Activated naive CD4-positive, alpha-beta T cell treated with anti-CD3 and anti-CD28 coated beads for 36 hours (primary cell): ENCODE measurements at regions of chr1 and their contacts with region 1.

Region 1: GRCh38 chr1:158124999-158125398 is 55.7 kb upstream of the CD1D start:
- DNase-seq: peak; percentile 86
- H3K4me3 Mint-ChIP-seq: no peak overlapping the region
- H3K27ac Mint-ChIP-seq: no peak overlapping the region
- H3K4me1 Mint-ChIP-seq: no peaks in the 10 kb centered on the region
- H3K27me3 Mint-ChIP-seq: peaks cover 23% of the 10 kb centered on the region

Region 2: GRCh38 chr1:157369808-157370521 is 755.0 kb before region 1 on chr1:
- CTCF ChIA-PET with region 1: no interaction called
- intact Hi-C with region 1: loop called (anchors 10 kb)
- DNase-seq: peak; percentile 58
- H3K4me3 Mint-ChIP-seq: no peak overlapping the region
- H3K27ac Mint-ChIP-seq: no peak overlapping the region
- H3K4me1 Mint-ChIP-seq: no peaks in the 10 kb centered on the region
- H3K27me3 Mint-ChIP-seq: peaks cover 8% of the 10 kb centered on the region

Region 3: DNA sequence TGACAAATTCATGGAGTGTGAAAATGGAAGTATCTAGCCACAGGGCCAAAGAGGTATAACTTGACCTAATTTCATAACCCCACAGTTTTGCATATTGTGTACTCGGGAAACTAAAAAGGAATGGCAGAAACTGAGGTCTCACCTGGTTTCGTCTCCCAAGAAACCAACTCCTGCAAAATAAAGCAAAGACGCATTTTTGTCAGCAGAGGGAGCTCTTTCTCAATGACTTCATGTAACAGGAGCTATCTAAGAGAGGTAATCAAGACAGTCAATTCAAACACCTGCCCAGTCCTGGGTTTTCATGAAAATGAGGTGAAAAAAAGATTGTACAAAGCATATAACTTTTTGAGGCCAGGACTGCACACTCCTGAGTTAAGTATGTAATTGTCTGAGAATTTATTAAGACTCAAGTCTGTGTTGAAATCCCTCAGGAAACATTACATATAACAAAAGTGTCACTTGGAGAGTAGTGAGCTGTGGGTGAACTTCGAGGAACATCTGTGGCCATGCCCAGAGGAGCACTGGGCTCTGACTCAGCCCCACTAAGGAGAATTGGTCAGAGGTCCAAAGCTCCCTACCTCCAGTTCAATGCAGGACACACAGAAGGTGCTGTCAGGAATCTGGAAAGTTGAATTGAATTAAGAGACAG is 544.7 kb before region 1 on chr1:
- CTCF ChIA-PET with region 1: interaction called, 13 read pairs
- intact Hi-C with region 1: loop called (anchors 5 kb)
- DNase-seq: peak; percentile 33
- H3K4me3 Mint-ChIP-seq: no peak overlapping the region
- H3K27ac Mint-ChIP-seq: no peak overlapping the region
- H3K4me1 Mint-ChIP-seq: no peaks in the 10 kb centered on the region
- H3K27me3 Mint-ChIP-seq: peaks cover 2% of the 10 kb centered on the region

Region 4: GRCh38 chr1:157652859-157653493 is 472.0 kb before region 1 on chr1:
- CTCF ChIA-PET with region 1: no interaction called
- intact Hi-C with region 1: no loop called
- DNase-seq: no peak
- H3K4me3 Mint-ChIP-seq: no peak overlapping the region
- H3K27ac Mint-ChIP-seq: no peak overlapping the region
- H3K4me1 Mint-ChIP-seq: no peaks in the 10 kb centered on the region
- H3K27me3 Mint-ChIP-seq: peaks cover 13% of the 10 kb centered on the region

Region 5: GRCh38 chr1:157838966-157839365 is 286.0 kb before region 1 on chr1:
- CTCF ChIA-PET with region 1: no interaction called
- intact Hi-C with region 1: no loop called
- DNase-seq: no peak
- H3K4me3 Mint-ChIP-seq: no peak overlapping the region
- H3K27ac Mint-ChIP-seq: no peak overlapping the region
- H3K4me1 Mint-ChIP-seq: no peaks in the 10 kb centered on the region
- H3K27me3 Mint-ChIP-seq: peaks cover 12% of the 10 kb centered on the region

Region 6: DNA sequence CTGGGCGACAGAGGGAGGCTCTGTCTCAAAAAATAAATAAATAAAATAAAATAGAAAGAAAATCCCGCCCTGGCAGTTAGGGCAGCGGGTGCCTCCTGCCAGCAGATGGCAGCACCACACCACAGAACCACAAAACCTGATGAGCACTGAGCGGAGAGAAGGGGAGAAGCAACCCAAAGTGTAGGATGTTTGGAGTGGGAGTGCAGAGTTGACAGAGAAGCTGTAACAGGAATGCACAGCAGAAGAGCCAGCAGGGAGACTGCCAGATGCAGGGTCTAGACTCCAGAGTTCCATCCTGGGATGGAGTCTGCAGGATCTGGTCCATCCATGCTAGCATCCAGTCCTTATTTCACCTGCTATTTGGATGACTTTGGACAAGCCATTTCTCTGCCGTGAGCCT is 161.3 kb before region 1 on chr1:
- CTCF ChIA-PET with region 1: interaction called, 29 read pairs
- intact Hi-C with region 1: loop called (anchors 1 kb)
- DNase-seq: peak; percentile 74
- H3K4me3 Mint-ChIP-seq: no peak overlapping the region
- H3K27ac Mint-ChIP-seq: no peak overlapping the region
- H3K4me1 Mint-ChIP-seq: no peaks in the 10 kb centered on the region
- H3K27me3 Mint-ChIP-seq: peaks cover 5% of the 10 kb centered on the region

Region 7: GRCh38 chr1:157969697-157970485 is 155.1 kb before region 1 on chr1:
- CTCF ChIA-PET with region 1: interaction called, 29 read pairs
- intact Hi-C with region 1: no loop called
- DNase-seq: peak; percentile 14
- H3K4me3 Mint-ChIP-seq: no peak overlapping the region
- H3K27ac Mint-ChIP-seq: no peak overlapping the region
- H3K4me1 Mint-ChIP-seq: no peaks in the 10 kb centered on the region
- H3K27me3 Mint-ChIP-seq: peaks cover 16% of the 10 kb centered on the region

Region 8: DNA sequence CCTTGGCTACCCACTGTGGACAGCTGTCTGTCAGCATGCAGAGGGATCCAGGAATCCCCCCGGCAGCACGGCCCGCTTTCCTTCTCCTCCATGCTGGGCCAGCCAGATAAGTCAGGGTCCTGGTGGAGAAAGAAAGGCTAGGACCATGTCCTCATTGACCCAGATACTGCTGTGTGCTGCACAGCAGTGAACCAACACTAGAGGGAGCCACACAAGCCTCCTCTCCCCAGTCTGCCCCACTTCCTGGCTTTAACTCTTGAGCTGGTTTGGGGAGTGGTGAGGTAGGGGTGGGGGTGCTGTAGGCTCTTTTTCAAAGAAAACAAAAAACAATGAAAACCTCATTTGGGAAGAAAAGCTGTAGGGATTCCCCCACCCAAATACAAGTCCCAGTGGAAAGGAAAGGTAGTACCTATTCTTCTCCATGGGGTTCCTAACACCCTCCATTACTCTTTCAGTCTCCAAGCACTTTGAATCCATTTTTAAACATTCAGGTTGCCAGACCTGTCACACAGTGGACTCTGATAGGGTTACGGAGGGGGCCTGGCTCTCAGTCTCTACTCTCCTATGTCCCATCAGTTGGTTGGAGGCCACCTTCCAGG is 29.2 kb before region 1 on chr1:
- CTCF ChIA-PET with region 1: interaction called, 38 read pairs
- intact Hi-C with region 1: loop called (anchors 1 kb)
- DNase-seq: peak; percentile 57
- H3K4me3 Mint-ChIP-seq: no peak overlapping the region
- H3K27ac Mint-ChIP-seq: no peak overlapping the region
- H3K4me1 Mint-ChIP-seq: no peaks in the 10 kb centered on the region
- H3K27me3 Mint-ChIP-seq: no peaks in the 10 kb centered on the region

Region 9: GRCh38 chr1:158107916-158108315 is 17.1 kb before region 1 on chr1:
- CTCF ChIA-PET with region 1: interaction called, 12 read pairs
- intact Hi-C with region 1: no loop called
- DNase-seq: no peak
- H3K4me3 Mint-ChIP-seq: no peak overlapping the region
- H3K27ac Mint-ChIP-seq: no peak overlapping the region
- H3K4me1 Mint-ChIP-seq: no peaks in the 10 kb centered on the region
- H3K27me3 Mint-ChIP-seq: peaks cover 7% of the 10 kb centered on the region

Region 10: DNA sequence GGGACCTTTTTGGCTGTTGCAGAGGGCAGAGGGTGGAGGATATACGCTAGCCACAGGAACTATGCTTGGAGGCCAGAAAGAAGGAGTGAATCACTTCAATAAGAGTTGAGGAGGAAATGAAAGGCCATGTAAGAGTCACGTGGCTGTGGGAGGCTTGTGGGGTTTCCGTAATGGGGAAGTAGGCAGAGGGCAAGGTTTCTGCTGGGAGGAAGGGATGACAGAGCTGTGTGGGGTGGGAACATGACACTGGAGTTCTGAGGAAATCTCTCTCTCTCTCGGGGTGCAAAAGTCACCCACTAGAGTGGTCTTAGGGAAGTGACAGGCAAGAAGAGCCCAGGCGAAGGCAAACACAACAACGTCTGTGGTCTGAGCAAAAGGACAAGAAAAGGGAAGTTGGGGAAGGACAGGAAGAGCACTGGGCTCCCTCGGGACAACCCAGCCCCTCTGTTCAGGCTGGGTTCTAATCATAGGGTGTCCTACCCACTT is 160.8 kb after region 1 on chr1:
- CTCF ChIA-PET with region 1: no interaction called
- intact Hi-C with region 1: no loop called
- DNase-seq: peak; percentile 12
- H3K4me3 Mint-ChIP-seq: peak overlapping the region; percentile 10
- H3K27ac Mint-ChIP-seq: no peak overlapping the region
- H3K4me1 Mint-ChIP-seq: peaks cover 10% of the 10 kb centered on the region
- H3K27me3 Mint-ChIP-seq: peaks cover 37% of the 10 kb centered on the region